ENCODE measurements at regions of chr17 and their contacts with region 1.

Region 1: DNA sequence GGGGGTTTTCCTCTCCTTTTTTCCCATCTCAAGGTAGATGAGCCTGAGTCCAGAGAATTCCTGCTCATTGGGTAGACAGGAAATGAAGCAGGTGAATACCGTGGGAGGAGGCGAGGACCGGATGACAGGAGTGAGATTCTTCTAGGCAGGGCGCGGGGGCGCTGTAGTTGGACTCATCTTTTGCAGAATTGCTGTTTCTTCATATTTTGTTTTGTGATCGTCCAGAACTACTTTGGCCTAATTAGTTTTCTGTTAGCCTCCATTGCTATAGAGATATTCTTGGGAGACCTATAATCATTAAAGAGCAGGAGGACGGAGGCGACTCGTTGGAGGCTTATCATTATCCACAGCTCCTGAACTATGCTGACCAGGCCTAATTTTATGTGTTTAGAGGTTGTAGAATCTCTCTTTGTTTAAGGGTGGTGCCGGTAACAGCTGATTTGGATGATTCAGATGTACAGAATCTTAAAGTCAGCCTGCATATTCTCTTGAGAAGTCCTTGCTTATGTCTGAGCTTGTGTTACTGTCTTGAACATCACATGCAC is 650 bp downstream of the ATP6V0A1 start:
- DNase-seq: peak in 4 of 14 experiments; percentile 39 to 44 (median 41)
- ATAC-seq: peak; percentile 11
- H3K4me3 ChIP-seq: peak overlapping the region; percentile 64
- H3K4me3 Mint-ChIP-seq: peak overlapping the region; percentile 92
- H3K27ac ChIP-seq: peak overlapping the region in 1 of 2 donors; percentile 3
- H3K27ac Mint-ChIP-seq: peak overlapping the region; percentile 85
- H3K4me1 ChIP-seq: peaks cover 45% of the 10 kb centered on the region
- H3K4me1 Mint-ChIP-seq: peaks cover 47% of the 10 kb centered on the region
- H3K27me3 ChIP-seq: no peaks in the 10 kb centered on the region
- H3K27me3 Mint-ChIP-seq: no peaks in the 10 kb centered on the region
- CTCF ChIP-seq: peak; percentile 23

Region 2: DNA sequence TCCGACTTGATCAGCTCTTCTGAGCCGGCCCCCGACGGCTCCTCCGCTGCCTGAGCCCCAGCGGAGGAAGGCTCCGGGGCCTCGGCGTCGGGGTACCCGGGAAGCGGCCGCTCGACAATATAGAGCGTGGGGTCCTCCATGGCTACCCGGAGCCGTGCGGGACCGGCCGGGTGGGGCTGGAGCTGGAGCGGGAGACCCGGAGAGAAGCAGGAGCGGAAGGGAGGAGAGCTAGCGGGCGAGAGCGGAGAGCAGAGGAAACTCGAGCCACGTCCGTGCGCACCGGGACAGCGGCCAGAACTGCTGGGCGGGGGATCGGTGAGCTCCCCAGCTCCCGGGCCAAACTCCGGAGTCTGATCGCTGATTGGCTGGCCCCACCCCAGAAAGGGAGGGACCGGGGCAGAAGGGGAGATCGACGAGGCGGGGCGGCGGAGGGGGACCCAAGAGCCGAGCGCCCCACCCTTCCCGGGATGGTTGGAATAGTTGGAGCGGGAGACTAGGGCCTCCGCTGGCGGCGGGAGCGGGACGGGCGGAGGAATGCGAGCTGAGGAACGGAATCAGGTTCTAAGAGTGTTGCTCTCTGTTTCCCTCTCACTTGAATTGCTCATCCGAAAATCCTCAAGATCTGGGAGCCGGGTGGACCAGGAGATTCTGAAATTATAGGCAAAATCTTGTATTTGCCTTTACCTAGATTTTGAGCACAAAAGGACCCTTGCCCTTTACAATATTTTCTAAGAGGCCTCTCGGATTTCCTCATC is 36.2 kb before region 1 on chr17 and contains the start of gene CAVIN1:
- CTCF ChIA-PET with region 1: no interaction called
- POLR2A ChIA-PET with region 1: interaction called, 4 read pairs
- intact Hi-C with region 1: loop called in 1 of 2 experiments (anchors 5 kb)
- DNase-seq: peak in 1 of 14 experiments; percentile 19
- ATAC-seq: peak; percentile 35
- H3K4me3 ChIP-seq: peak within 1 kb of the TSS; percentile 50
- H3K4me3 Mint-ChIP-seq: peak within 1 kb of the TSS; percentile 88
- H3K27ac ChIP-seq: no peak within 1 kb of the TSS
- H3K27ac Mint-ChIP-seq: no peak within 1 kb of the TSS
- H3K4me1 ChIP-seq: peaks cover 24% of the 10 kb centered on the region
- H3K4me1 Mint-ChIP-seq: peaks cover 16% of the 10 kb centered on the region
- H3K27me3 ChIP-seq: peaks cover 21 to 28% of the 10 kb centered on the region in 2 experiments
- H3K27me3 Mint-ChIP-seq: peaks cover 27% of the 10 kb centered on the region
- CTCF ChIP-seq: no peak
- total RNA-seq, gene CAVIN1: 0.14 to 0.16 TPM

Region 3: GRCh38 chr17:42484304-42484703 is 25.0 kb after region 1 on chr17:
- CTCF ChIA-PET with region 1: no interaction called
- POLR2A ChIA-PET with region 1: interaction called, 3 read pairs
- intact Hi-C with region 1: loop called in 1 of 2 experiments (anchors 2 kb)
- DNase-seq: peak; percentile 33 to 94 (median 50)
- ATAC-seq: peak; percentile 95
- H3K4me3 ChIP-seq: peak overlapping the region; percentile 10
- H3K4me3 Mint-ChIP-seq: peak overlapping the region; percentile 52
- H3K27ac ChIP-seq: no peak overlapping the region
- H3K27ac Mint-ChIP-seq: peak overlapping the region; percentile 32
- H3K4me1 ChIP-seq: peaks cover 33% of the 10 kb centered on the region
- H3K4me1 Mint-ChIP-seq: peaks cover 39% of the 10 kb centered on the region
- H3K27me3 ChIP-seq: no peaks in the 10 kb centered on the region
- H3K27me3 Mint-ChIP-seq: no peaks in the 10 kb centered on the region
- CTCF ChIP-seq: no peak